Naive thymus-derived CD8-positive, alpha-beta T cell (primary cell): ENCODE measurements at regions of chr11 and their contacts with region 1.

Region 1: GRCh38 chr11:1572197-1573076 is at the start of gene DUSP8:
- DNase-seq: peak; percentile 90 to 98 (median 95)
- ATAC-seq: peak; percentile 52 to 67
- H3K4me3 Mint-ChIP-seq: peak within 1 kb of the TSS; percentile 64 to 93 (median 80)
- H3K27ac Mint-ChIP-seq: peak within 1 kb of the TSS in 9 of 10 donors; percentile 27 to 95 (median 87)
- H3K4me1 Mint-ChIP-seq: peaks cover 12 to 34% (median 23%) of the 10 kb centered on the region in 4 donors
- H3K27me3 Mint-ChIP-seq: peaks cover 0 to 8% (median 3%) of the 10 kb centered on the region in 5 donors
- polyA plus RNA-seq, gene DUSP8: 0.17 to 0.39 TPM in 2 of 3 donors, not detected in the other

Region 2: DNA sequence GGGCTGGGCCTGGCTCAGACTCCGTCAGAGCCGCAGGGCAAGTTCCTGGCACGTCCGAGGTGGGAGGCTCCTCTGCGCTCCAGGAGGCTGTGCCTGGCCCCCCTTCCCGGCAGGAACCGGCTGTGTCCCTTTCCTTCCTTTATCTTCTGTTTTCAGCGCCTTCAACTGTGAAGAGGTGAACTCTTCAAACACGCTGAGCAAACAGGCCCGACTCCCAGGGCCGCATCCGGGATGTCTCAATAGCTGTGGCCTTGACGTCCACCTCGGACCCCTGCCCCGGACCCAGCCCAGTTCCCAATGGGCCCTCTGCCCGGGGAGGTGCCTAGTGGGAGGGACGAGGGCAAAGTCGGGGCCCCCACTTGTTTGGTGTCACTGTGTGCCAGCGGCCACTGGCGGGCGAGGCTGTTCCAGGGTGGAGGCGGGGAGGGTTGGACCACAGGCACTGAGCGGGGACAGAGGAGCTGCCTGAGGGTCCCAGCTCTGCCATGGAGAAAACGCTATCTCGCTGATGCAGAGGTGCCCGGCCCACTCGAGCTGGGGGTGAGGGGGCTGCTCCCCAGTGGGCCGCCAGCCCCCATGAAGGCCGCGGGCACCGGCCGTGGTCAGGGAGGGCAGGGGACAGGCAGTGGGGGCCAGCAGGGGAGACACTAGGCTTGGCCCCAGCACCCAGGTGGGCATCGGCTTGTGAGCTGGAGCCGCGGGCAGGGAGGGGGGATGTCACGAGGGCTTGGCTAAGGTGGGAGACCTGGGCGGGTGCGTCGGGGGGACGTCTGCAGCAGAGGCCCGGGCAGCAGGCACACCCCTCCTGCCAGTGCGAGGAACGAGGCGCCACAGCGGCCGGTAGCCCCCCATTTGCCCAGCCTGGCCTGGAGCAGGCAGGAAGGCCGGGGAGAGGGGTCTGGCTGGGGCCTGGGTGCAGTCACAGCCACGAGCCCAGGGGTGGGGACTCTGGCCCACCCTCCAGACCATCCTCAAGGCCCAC is 352.3 kb before region 1 on chr11:
- POLR2A ChIA-PET with region 1: no interaction called
- DNase-seq: peak in 2 of 10 donors; percentile 3 to 59
- ATAC-seq: no peak
- H3K4me3 Mint-ChIP-seq: no peak overlapping the region
- H3K27ac Mint-ChIP-seq: no peak overlapping the region
- H3K4me1 Mint-ChIP-seq: peaks cover 0 to 2% (median 0%) of the 10 kb centered on the region in 4 donors
- H3K27me3 Mint-ChIP-seq: peaks cover 3 to 27% (median 21%) of the 10 kb centered on the region in 5 donors

Region 3: GRCh38 chr11:1546536-1547400 is 25.7 kb before region 1 on chr11:
- POLR2A ChIA-PET with region 1: interaction called, 28 read pairs
- DNase-seq: peak in 8 of 10 donors; percentile 32 to 67 (median 56)
- ATAC-seq: peak; percentile 81 to 83
- H3K4me3 Mint-ChIP-seq: peak overlapping the region in 7 of 10 donors; percentile 7 to 64 (median 45)
- H3K27ac Mint-ChIP-seq: no peak overlapping the region
- H3K4me1 Mint-ChIP-seq: peaks cover 2 to 10% (median 6%) of the 10 kb centered on the region in 4 donors
- H3K27me3 Mint-ChIP-seq: peaks cover 9 to 45% (median 17%) of the 10 kb centered on the region in 5 donors

Region 4: GRCh38 chr11:1650034-1650917 is 77.8 kb after region 1 on chr11:
- POLR2A ChIA-PET with region 1: no interaction called
- DNase-seq: no peak
- ATAC-seq: no peak
- H3K4me3 Mint-ChIP-seq: no peak overlapping the region
- H3K27ac Mint-ChIP-seq: no peak overlapping the region
- H3K4me1 Mint-ChIP-seq: peaks cover 0 to 4% (median 0%) of the 10 kb centered on the region in 4 donors
- H3K27me3 Mint-ChIP-seq: peaks cover 2 to 18% (median 10%) of the 10 kb centered on the region in 5 donors